ENCODE measurements at regions of chr9 and their contacts with region 1.

Region 1: GRCh38 chr9:115540091-115540490 is 422.1 kb upstream of the TNC start:
- DNase-seq: no peak
- H3K4me3 ChIP-seq: no peak overlapping the region
- H3K4me3 Mint-ChIP-seq: no peak overlapping the region
- H3K27ac ChIP-seq: no peak overlapping the region
- H3K27ac Mint-ChIP-seq: no peak overlapping the region
- H3K4me1 ChIP-seq: no peaks in the 10 kb centered on the region
- H3K4me1 Mint-ChIP-seq: no peaks in the 10 kb centered on the region
- H3K27me3 ChIP-seq: no peaks in the 10 kb centered on the region
- H3K27me3 Mint-ChIP-seq: peaks cover 0 to 4% (median 0%) of the 10 kb centered on the region in 3 donors
- CTCF ChIP-seq: no peak

Region 2: GRCh38 chr9:115494393-115494792 is 45.7 kb before region 1 on chr9:
- intact Hi-C with region 1: loop called in 1 of 2 experiments (anchors 5 kb)
- DNase-seq: no peak
- H3K4me3 ChIP-seq: no peak overlapping the region
- H3K4me3 Mint-ChIP-seq: no peak overlapping the region
- H3K27ac ChIP-seq: no peak overlapping the region
- H3K27ac Mint-ChIP-seq: no peak overlapping the region
- H3K4me1 ChIP-seq: no peaks in the 10 kb centered on the region
- H3K4me1 Mint-ChIP-seq: no peaks in the 10 kb centered on the region
- H3K27me3 ChIP-seq: no peaks in the 10 kb centered on the region
- H3K27me3 Mint-ChIP-seq: peaks cover 0 to 5% (median 2%) of the 10 kb centered on the region in 3 donors
- CTCF ChIP-seq: no peak